CD4-positive, alpha-beta memory T cell (primary cell): ENCODE measurements at regions of chr9 and their contacts with region 1.

Region 1: GRCh38 chr9:135639196-135639595 is at the start of gene GLT6D1:
- DNase-seq: no peak
- H3K4me3 ChIP-seq: no peak within 1 kb of the TSS
- H3K4me3 Mint-ChIP-seq: no peak within 1 kb of the TSS
- H3K27ac ChIP-seq: no peak within 1 kb of the TSS
- H3K27ac Mint-ChIP-seq: no peak within 1 kb of the TSS
- H3K4me1 ChIP-seq: no peaks in the 10 kb centered on the region
- H3K4me1 Mint-ChIP-seq: peaks cover 0 to 2% (median 0%) of the 10 kb centered on the region in 4 donors
- H3K27me3 ChIP-seq: no peaks in the 10 kb centered on the region
- H3K27me3 Mint-ChIP-seq: peaks cover 20 to 34% of the 10 kb centered on the region in 2 donors
- total RNA-seq, gene GLT6D1: not detected

Region 2: DNA sequence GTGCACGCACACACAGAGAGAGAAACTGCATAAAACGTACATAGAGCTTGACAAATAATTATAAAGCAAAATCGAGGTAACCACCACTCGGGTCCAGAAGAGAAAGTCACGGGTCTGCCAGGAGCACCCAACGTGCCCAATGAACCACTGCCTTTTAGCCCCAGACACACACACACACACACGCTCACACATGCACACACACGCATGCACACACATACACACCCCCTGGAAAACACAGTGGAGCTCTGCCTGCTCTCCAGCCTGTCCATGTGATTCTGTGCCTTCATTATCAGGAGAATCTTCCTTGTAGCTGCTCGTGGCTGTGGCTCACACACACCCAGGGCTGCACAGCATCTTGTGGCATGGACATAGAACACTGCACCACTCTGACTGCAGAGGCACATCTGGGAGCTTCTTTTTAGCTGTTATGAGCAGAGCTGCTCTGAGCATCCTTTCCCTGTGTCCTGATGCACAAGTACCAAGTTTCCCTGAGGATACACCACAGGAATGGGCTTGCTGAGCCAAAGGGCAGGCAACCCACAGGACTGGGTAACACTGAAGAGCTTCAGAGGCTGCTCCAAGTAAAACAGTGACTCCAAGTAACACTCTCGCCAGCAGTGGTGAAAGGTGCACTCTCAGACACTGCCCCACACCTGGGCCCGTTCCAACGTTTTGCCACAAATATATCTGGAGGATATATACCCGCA is 209.3 kb after region 1 on chr9:
- CTCF ChIA-PET with region 1: no interaction called
- POLR2A ChIA-PET with region 1: no interaction called
- intact Hi-C with region 1: loop called (anchors 5 kb)
- DNase-seq: no peak
- H3K4me3 ChIP-seq: no peak overlapping the region
- H3K4me3 Mint-ChIP-seq: no peak overlapping the region
- H3K27ac ChIP-seq: no peak overlapping the region
- H3K27ac Mint-ChIP-seq: peak overlapping the region in 4 of 7 donors; percentile 12 to 84 (median 56)
- H3K4me1 ChIP-seq: no peaks in the 10 kb centered on the region
- H3K4me1 Mint-ChIP-seq: peaks cover 8 to 21% (median 12%) of the 10 kb centered on the region in 4 donors
- H3K27me3 ChIP-seq: no peaks in the 10 kb centered on the region
- H3K27me3 Mint-ChIP-seq: no peaks in the 10 kb centered on the region